SK-N-SH (cell line): ENCODE measurements at regions of chr7 and their contacts with region 1.

Region 1: GRCh38 chr7:155533827-155534690 is 12.3 kb downstream of the CNPY1 start:
- DNase-seq: peak; percentile 92
- H3K4me3 ChIP-seq: peak overlapping the region in 1 of 2 experiments; percentile 34; a peak in 2 of 4 replicates
- H3K27ac ChIP-seq: no peak overlapping the region
- H3K4me1 ChIP-seq: peaks cover 0 to 11% of the 10 kb centered on the region in 2 experiments; a peak in 1 of 4 replicates
- H3K27me3 ChIP-seq: peaks cover 83% of the 10 kb centered on the region
- CTCF ChIP-seq: peak; percentile 75
- EP300 ChIP-seq: no peak
- RAD21 ChIP-seq: peak; percentile 55

Region 2: DNA sequence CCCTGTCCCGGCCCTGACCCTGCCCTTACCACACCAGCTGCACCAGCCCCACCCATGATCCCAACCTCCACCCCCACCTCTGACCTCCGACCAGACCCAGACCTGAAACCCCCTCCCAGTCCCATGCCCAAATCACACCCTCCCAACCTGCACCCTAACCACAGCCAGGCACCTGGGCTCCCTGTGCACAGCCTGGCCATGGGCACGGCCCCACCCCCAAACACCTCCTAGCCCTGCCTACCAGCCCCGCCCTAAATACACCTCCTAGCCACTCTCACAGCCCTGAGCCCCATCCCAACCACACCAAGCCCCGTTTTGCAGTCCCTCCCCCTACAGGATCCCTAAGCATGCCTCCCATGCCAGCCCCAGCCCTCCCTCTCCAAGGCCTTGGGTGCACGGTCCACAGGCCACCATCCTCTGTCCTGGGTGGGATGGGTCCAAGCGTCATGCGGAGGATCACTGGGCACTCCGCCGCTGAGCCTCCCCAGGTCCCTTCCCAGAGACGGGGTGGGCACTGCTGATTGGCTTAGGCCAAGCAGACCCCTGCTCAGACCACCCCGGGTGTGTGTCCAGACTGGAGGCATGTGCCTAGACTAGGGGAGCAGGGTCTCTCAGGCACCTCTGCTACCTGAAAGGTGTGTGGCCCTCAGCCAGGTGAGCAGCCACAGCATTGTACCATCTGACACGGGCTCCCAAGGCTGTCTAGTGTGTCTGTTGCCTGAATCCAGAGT is 206.3 kb before region 1 on chr7:
- CTCF ChIA-PET with region 1: no interaction called
- POLR2A ChIA-PET with region 1: no interaction called
- DNase-seq: no peak
- H3K4me3 ChIP-seq: no peak overlapping the region
- H3K27ac ChIP-seq: no peak overlapping the region
- H3K4me1 ChIP-seq: peaks cover 0 to 5% of the 10 kb centered on the region in 2 experiments; a peak in 1 of 4 replicates
- H3K27me3 ChIP-seq: no peaks in the 10 kb centered on the region
- CTCF ChIP-seq: no peak
- EP300 ChIP-seq: no peak
- RAD21 ChIP-seq: no peak

Region 3: DNA sequence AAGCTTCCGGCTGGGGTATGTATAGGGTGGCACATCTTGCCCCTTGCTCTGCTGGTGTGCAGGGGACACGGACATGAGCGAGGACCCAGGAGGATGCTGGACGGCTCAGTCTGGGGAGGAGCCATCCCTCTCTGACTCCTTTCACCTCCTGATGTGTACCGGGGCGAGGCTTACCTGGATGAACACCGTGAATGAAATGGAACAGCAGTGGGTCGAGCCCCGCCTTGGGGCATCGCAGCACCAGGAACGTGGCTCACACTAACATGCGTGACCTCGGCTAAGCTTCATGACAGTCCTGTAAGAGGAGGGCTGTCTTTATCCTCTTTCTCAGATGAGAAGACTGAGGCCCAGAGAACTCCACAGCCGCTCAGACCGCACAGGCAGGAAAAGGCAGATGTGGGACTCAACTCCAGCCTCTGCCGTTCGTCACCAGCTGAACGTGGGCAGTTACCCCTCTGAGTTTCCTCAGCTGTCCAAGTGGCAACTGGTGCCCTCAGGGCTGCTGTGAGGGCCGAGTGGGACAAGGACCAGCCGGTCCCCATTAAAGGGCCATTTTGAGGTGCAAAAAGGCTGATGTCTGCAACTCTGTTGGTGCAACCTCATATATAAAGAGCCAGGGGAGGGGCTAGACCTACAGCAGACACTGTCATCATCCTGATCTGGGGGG is 181.8 kb before region 1 on chr7:
- CTCF ChIA-PET with region 1: no interaction called
- POLR2A ChIA-PET with region 1: no interaction called
- DNase-seq: no peak
- H3K4me3 ChIP-seq: no peak overlapping the region
- H3K27ac ChIP-seq: no peak overlapping the region
- H3K4me1 ChIP-seq: no peaks in the 10 kb centered on the region; a peak in 1 of 4 replicates
- H3K27me3 ChIP-seq: peaks cover 8% of the 10 kb centered on the region; the same call in 1 of the 2 replicates
- CTCF ChIP-seq: no peak
- EP300 ChIP-seq: no peak
- RAD21 ChIP-seq: no peak

Region 4: GRCh38 chr7:155555116-155555695 is 21.1 kb after region 1 on chr7:
- CTCF ChIA-PET with region 1: interaction called, 16 read pairs
- POLR2A ChIA-PET with region 1: no interaction called
- DNase-seq: no peak
- H3K4me3 ChIP-seq: no peak overlapping the region
- H3K27ac ChIP-seq: no peak overlapping the region
- H3K4me1 ChIP-seq: no peaks in the 10 kb centered on the region
- H3K27me3 ChIP-seq: peaks cover 40% of the 10 kb centered on the region
- CTCF ChIP-seq: no peak
- EP300 ChIP-seq: no peak
- RAD21 ChIP-seq: no peak

Region 5: DNA sequence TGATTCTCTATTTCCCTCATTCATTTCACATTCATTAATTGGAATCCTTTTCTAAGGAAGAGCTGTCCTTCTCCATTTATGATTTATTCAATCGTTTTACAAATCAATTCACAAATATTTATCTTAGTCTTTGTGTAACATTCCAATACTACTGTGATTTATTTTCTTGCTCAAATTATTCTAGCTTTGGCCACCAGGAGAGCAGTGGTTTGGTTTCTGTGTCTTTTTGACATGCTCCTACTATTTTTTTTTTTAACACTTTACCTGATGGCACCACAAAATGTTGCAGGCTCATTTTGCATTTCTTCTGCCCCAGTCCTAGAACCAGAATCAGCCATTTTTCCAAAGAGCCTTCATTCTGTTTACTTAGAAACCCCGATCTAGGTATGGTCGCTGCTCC is 97.1 kb after region 1 on chr7:
- CTCF ChIA-PET with region 1: no interaction called
- POLR2A ChIA-PET with region 1: no interaction called
- DNase-seq: no peak
- H3K4me3 ChIP-seq: no peak overlapping the region
- H3K27ac ChIP-seq: no peak overlapping the region
- H3K4me1 ChIP-seq: no peaks in the 10 kb centered on the region
- H3K27me3 ChIP-seq: no peaks in the 10 kb centered on the region
- CTCF ChIP-seq: peak; percentile 34; the same call in 1 of the 2 replicates
- EP300 ChIP-seq: no peak
- RAD21 ChIP-seq: no peak